Mammary epithelial cell (primary cell): ENCODE measurements at regions of chr19 and their contacts with region 1.

Region 1: DNA sequence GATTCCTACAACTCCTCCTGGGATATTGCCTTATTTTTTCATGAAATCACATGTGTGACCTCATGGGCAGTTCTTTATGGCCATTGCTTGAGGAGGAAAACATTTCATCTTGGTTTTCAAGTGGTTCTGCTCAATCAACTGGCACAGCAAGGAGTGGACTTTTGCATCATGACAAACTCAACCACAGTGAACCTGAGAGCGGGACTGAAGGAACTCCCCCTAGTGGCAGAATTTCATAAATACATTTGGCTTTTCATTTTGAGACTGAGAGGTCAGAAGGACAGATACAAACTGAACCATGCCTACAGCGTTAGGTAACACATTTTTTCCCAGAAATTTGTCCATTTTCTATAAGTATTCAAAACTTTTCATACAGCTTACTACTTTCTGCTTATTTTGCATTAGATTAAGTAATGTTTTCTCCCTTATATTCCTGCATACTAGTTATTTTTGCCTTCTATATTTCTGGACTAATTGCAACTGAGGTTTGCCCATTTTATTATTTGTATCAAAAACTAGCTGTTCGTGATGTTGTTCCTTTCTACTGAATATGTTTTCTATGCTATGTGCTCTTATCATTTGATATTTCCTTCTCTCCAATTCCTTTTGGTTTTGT is 13.4 kb upstream of the SIGLEC12 start:
- DNase-seq: peak; percentile 39
- H3K4me3 ChIP-seq: no peak overlapping the region
- H3K27ac ChIP-seq: no peak overlapping the region
- H3K4me1 ChIP-seq: no peaks in the 10 kb centered on the region
- H3K27me3 ChIP-seq: no peaks in the 10 kb centered on the region
- CTCF ChIP-seq: peak; percentile 75 to 79

Region 2: GRCh38 chr19:51407511-51408131 is 107.4 kb before region 1 on chr19:
- CTCF ChIA-PET with region 1: no interaction called
- dilution Hi-C with region 1: loop called (anchors 5 kb)
- in situ Hi-C with region 1: no loop called
- intact Hi-C with region 1: no loop called
- DNase-seq: peak; percentile 20
- H3K4me3 ChIP-seq: no peak overlapping the region
- H3K27ac ChIP-seq: no peak overlapping the region
- H3K4me1 ChIP-seq: no peaks in the 10 kb centered on the region
- H3K27me3 ChIP-seq: no peaks in the 10 kb centered on the region
- CTCF ChIP-seq: peak; percentile 22 to 61

Region 3: GRCh38 chr19:51422053-51422448 is 92.9 kb before region 1 on chr19:
- CTCF ChIA-PET with region 1: no interaction called
- dilution Hi-C with region 1: no loop called
- in situ Hi-C with region 1: no loop called
- intact Hi-C with region 1: loop called (anchors 5 kb)
- DNase-seq: peak; percentile 63
- H3K4me3 ChIP-seq: no peak overlapping the region
- H3K27ac ChIP-seq: no peak overlapping the region
- H3K4me1 ChIP-seq: no peaks in the 10 kb centered on the region
- H3K27me3 ChIP-seq: peaks cover 2% of the 10 kb centered on the region
- CTCF ChIP-seq: peak; percentile 87 to 99

Region 4: GRCh38 chr19:51531349-51532315 is 16.7 kb after region 1 on chr19 and contains the start of gene SIGLEC6:
- CTCF ChIA-PET with region 1: no interaction called
- dilution Hi-C with region 1: no loop called
- in situ Hi-C with region 1: no loop called
- intact Hi-C with region 1: no loop called
- DNase-seq: no peak
- H3K4me3 ChIP-seq: no peak within 1 kb of the TSS
- H3K27ac ChIP-seq: no peak within 1 kb of the TSS
- H3K4me1 ChIP-seq: no peaks in the 10 kb centered on the region
- H3K27me3 ChIP-seq: no peaks in the 10 kb centered on the region
- CTCF ChIP-seq: no peak
- total RNA-seq, gene SIGLEC6: not detected